Heart left ventricle (tissue), 16 donors: ENCODE measurements at regions of chr9 and their contacts with region 1.

Region 1: GRCh38 chr9:88694625-88695024 is 159.6 kb downstream of the NXNL2 start:
- DNase-seq: peak in 2 of 5 donors; percentile 27 to 44
- ATAC-seq: peak in 2 of 4 donors; percentile 56 to 75
- H3K4me3 ChIP-seq: no peak overlapping the region
- H3K27ac ChIP-seq: peak overlapping the region in 7 of 12 donors; percentile 6 to 51 (median 27)
- H3K4me1 ChIP-seq: no peaks in the 10 kb centered on the region
- H3K27me3 ChIP-seq: no peaks in the 10 kb centered on the region
- CTCF ChIP-seq: no peak
- POLR2A ChIP-seq: no peak

Region 2: GRCh38 chr9:88291856-88292255 is 402.8 kb before region 1 on chr9:
- intact Hi-C with region 1: no loop called
- DNase-seq: no peak
- ATAC-seq: no peak
- H3K4me3 ChIP-seq: no peak overlapping the region
- H3K27ac ChIP-seq: no peak overlapping the region
- H3K4me1 ChIP-seq: no peaks in the 10 kb centered on the region
- H3K27me3 ChIP-seq: no peaks in the 10 kb centered on the region
- CTCF ChIP-seq: no peak
- POLR2A ChIP-seq: no peak

Region 3: DNA sequence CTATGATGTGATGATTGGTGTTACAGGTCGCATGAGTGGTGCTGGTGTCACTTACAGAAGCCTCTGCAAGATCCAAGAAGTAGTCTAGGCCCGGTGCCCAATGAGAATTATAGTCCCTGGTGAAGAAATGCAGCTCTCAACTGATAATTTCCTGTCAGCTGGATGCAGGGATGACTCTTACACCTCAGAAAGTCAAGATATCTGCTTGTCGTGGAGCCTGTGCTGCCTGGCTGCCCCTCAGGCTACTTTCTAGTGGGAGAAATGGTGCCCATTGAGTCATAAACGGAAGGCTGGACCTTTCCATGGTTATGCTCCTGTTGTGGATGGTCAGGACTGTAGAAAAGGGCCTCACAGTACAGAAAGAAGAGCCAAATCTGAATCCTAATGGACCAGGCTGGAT is 206.5 kb before region 1 on chr9:
- intact Hi-C with region 1: no loop called
- DNase-seq: no peak
- ATAC-seq: no peak
- H3K4me3 ChIP-seq: no peak overlapping the region
- H3K27ac ChIP-seq: no peak overlapping the region
- H3K4me1 ChIP-seq: no peaks in the 10 kb centered on the region
- H3K27me3 ChIP-seq: no peaks in the 10 kb centered on the region
- CTCF ChIP-seq: no peak
- POLR2A ChIP-seq: no peak

Region 4: DNA sequence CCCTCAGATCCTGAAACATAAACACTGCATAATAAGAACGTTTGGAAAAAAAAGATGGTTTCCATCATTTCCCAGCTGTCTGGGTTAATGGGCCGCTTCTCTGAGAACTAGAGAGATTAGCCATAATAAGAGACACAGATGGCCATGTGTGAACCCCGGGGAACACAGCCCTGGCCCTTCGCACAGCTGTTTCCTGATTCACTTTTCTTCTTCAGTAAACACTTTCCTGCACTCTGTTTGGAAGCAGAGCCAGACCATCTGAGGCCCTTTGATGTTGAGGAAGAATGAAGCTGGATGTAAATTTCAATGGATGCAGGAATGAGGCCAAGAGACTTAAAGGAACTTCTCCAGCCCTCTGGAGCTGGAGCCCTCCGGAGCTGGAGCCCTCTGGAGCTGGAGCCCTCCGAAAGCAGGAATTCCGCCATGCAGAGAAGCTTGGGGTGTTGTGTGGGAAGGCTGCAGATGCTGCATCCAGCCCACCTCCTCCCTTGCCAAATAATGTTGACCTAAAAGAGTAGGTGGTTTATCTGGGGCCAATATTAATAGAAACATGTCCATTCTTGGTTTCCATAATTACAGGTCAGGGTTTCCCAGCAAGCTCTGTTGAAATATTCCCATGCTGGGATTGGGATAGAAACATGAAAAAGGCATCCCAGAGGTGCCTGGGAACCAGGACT is 59.2 kb after region 1 on chr9:
- intact Hi-C with region 1: loop called in 1 of 10 experiments (anchors 5 kb)
- DNase-seq: peak in 4 of 5 donors; percentile 67 to 68 (median 67)
- ATAC-seq: peak; percentile 56 to 87 (median 79)
- H3K4me3 ChIP-seq: no peak overlapping the region
- H3K27ac ChIP-seq: peak overlapping the region in 10 of 12 donors; percentile 24 to 72 (median 50)
- H3K4me1 ChIP-seq: peaks cover 0 to 21% (median 7%) of the 10 kb centered on the region in 12 donors
- H3K27me3 ChIP-seq: no peaks in the 10 kb centered on the region
- CTCF ChIP-seq: no peak
- POLR2A ChIP-seq: no peak